Dendritic cell treated with granulocyte-macrophage colony-stimulating factor and Interleukin-4, amounts not matched to agents 40 ng/mL and 50 ng/mL, for 4 days (primary cell): ENCODE measurements at regions of chr3 and their contacts with region 1.

Region 1: DNA sequence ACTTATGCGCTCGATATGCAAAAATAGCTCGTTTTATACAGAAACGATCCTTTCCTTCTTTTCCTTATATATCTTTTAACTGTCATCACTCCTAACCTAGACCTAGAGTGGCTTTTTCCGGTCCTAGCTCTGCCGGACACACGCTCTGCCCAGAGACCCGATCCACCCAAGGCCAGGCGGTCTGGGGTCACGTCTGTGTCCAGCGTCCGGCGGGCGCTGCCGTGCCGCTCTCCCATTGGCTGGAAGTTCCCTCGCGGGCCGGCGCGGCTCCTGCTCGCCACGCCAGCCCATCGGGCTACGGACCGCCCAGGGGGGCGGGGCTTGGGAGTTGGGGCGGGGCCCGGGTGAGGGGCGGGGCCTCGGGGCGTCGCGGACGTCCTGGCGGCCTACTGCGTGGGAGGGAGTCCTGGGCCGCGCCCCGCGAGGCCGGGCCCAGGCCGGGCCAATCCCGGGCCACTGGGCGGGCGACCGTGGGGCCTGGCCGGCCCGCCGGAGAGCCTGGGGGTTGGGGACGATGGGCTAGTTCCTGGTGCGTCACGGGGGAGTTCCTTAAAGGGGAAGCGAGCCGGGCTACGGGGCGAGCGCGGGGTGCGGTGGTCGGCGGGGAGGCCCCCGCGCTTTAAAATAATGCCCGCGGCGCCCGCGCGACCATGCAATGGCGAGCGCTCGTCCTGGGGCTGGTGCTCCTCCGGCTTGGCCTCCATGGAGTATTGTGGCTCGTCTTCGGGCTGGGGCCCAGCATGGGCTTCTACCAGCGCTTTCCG is at the start of gene EDEM1:
- H3K4me3 Mint-ChIP-seq: peak within 1 kb of the TSS; percentile 98
- H3K27ac Mint-ChIP-seq: peak within 1 kb of the TSS; percentile 85
- H3K4me1 Mint-ChIP-seq: peaks cover 50% of the 10 kb centered on the region
- H3K27me3 Mint-ChIP-seq: no peaks in the 10 kb centered on the region

Region 2: GRCh38 chr3:4493014-4493940 is 694.1 kb before region 1 on chr3 and contains the start of gene ITPR1:
- intact Hi-C with region 1: loop called (anchors 2 kb)
- H3K4me3 Mint-ChIP-seq: peak within 1 kb of the TSS; percentile 87
- H3K27ac Mint-ChIP-seq: peak within 1 kb of the TSS; percentile 87
- H3K4me1 Mint-ChIP-seq: peaks cover 46% of the 10 kb centered on the region
- H3K27me3 Mint-ChIP-seq: peaks cover 4% of the 10 kb centered on the region

Region 3: DNA sequence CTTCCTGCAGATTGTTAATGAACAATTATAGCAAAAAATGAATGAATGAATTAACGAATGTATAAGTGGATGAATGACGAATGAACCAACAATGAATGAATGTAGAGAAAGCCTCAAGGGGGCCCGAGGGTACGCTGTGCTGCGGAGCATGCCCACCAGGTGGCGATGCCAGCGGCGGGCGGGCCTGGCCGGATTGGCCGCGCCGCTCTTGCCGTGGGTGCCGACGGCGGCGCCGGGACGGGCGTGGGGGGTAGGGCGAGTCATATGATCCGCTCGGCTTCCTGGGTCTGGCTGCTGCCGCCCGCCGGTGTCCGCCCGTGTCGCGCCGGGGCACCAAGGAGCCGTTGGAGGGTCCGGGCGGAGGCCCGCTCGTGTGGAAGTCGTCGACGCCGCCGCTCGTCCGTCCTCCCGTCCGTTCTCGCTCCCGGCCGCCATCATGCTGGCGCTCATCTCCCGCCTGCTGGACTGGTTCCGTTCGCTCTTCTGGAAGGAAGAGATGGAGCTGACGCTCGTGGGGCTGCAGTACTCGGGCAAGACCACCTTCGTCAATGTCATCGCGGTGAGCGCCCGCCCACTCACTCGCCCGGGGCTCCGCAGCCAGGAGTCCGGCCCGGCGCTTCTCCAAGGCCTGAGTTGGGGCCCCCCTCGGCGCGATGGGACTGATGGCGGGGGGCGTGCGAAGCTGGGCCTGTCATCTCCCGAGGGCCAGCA is 65.2 kb before region 1 on chr3 and contains the start of gene ARL8B:
- intact Hi-C with region 1: loop called (anchors 2 kb)
- H3K4me3 Mint-ChIP-seq: peak within 1 kb of the TSS; percentile 97
- H3K27ac Mint-ChIP-seq: peak within 1 kb of the TSS; percentile 99
- H3K4me1 Mint-ChIP-seq: peaks cover 33% of the 10 kb centered on the region
- H3K27me3 Mint-ChIP-seq: no peaks in the 10 kb centered on the region

Region 4: DNA sequence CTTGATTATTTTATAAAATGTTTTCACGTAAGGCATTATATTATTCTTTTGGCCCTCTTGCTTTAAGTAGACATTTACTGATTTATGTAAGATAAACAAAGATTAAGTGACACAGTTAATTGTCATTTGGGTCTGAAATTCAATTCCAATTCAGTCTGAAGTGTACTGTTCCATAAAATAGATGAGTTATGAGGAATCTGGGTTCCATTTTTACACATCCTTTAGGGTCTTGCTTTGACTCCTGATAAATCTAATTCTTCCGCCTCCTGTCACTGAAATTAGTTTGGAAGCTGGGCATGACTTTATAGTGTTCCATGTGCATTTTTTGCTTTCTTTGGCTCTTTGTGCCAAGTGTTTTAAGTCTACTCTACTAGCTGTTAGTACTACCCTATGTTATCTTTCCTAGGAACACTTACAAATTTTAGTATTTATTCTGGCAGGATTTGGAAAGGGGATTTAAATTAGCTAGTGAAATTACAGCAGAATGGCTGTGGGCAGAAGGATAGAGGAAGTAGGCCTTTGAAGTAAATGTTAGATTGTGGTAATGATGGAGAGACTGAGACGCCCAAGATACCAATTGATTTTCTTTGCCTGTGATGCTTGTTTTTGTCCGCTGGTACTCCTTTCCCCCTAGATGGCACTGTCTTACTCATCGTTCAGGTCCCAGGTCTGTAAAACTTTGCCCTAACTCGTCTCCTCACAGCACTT is 51.0 kb before region 1 on chr3:
- intact Hi-C with region 1: loop called (anchors 1 kb)
- H3K4me3 Mint-ChIP-seq: no peak overlapping the region
- H3K27ac Mint-ChIP-seq: peak overlapping the region; percentile 82
- H3K4me1 Mint-ChIP-seq: peaks cover 84% of the 10 kb centered on the region
- H3K27me3 Mint-ChIP-seq: no peaks in the 10 kb centered on the region

Region 5: GRCh38 chr3:5198986-5199731 is 11.8 kb after region 1 on chr3:
- intact Hi-C with region 1: loop called (anchors 1 kb)
- H3K4me3 Mint-ChIP-seq: peak overlapping the region; percentile 51
- H3K27ac Mint-ChIP-seq: peak overlapping the region; percentile 93
- H3K4me1 Mint-ChIP-seq: peaks cover 61% of the 10 kb centered on the region
- H3K27me3 Mint-ChIP-seq: no peaks in the 10 kb centered on the region

Region 6: GRCh38 chr3:5918626-5919025 is 731.3 kb after region 1 on chr3:
- intact Hi-C with region 1: no loop called
- H3K4me3 Mint-ChIP-seq: no peak overlapping the region
- H3K27ac Mint-ChIP-seq: no peak overlapping the region
- H3K4me1 Mint-ChIP-seq: no peaks in the 10 kb centered on the region
- H3K27me3 Mint-ChIP-seq: no peaks in the 10 kb centered on the region